RWPE1 (cell line): ENCODE measurements at regions of chr13 and their contacts with region 1.

Region 1: GRCh38 chr13:41960639-41961465 is at the start of gene VWA8:
- DNase-seq: peak; percentile 72
- H3K27ac ChIP-seq: peak within 1 kb of the TSS; percentile 92
- CTCF ChIP-seq: no peak

Region 2: DNA sequence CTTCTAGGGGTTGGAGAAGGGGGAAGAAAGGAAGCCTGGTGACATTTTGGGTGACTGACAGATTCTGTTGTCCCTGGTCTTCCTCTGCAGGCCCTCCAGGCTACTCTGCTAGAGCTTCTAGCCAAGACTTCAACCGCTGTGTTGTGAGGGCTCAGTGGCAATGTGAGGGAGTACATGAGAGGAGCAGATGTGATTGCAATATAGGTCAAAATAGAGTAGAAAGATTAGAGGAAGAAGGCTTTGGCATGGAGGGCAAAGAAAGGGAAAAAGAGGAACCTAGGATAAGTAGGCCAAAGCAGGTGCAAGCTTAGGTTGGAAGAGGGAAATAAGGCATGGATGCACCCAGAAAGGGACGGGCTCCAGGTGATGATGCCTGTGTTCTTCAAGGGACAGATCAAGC is 286.6 kb before region 1 on chr13:
- CTCF ChIA-PET with region 1: interaction called, 12 read pairs
- POLR2A ChIA-PET with region 1: no interaction called
- DNase-seq: no peak
- H3K27ac ChIP-seq: no peak overlapping the region
- CTCF ChIP-seq: no peak

Region 3: GRCh38 chr13:41864658-41865057 is 96.2 kb before region 1 on chr13:
- CTCF ChIA-PET with region 1: no interaction called
- POLR2A ChIA-PET with region 1: no interaction called
- DNase-seq: no peak
- H3K27ac ChIP-seq: no peak overlapping the region
- CTCF ChIP-seq: no peak